Spleen (tissue), 13 donors: ENCODE measurements at regions of chr12 and their contacts with region 1.

Region 1: DNA sequence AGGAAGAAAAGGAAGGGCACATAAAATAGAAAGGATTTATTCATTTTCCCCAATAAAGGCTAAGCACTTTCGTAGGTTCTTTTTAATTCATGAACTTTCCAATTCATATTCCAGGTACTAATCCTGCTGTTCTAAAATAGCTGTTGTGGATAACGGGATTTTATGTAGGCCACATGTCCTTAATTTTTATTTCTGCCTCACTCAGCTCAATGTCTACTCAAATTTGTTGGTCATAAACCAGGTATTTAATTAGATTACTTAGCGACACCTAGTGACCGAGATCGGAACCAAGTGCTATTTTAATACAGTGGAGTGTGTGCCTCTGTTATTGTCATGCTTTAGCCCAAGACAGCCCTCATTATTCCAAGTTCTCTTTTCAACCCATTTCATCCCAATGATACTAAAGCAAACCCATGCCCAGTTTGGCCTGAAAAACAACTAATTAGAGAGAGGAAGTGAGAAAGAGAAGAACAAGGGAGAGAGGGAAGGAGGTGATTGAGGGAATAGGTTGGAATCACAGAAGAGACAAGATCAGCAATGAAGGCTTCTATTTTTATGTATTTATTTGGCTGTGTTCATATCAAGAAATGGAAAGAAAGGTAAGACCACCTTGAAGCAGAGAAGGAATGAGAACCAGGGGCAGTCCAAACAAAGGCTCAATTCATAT is 45.9 kb upstream of the IFNG-AS1 start:
- DNase-seq: no peak
- H3K4me3 ChIP-seq: no peak overlapping the region
- H3K27ac ChIP-seq: no peak overlapping the region
- H3K4me1 ChIP-seq: peaks cover 0 to 9% (median 0%) of the 10 kb centered on the region in 6 donors
- H3K27me3 ChIP-seq: no peaks in the 10 kb centered on the region
- CTCF ChIP-seq: peak; percentile 30 to 83 (median 74)
- POLR2A ChIP-seq: no peak

Region 2: DNA sequence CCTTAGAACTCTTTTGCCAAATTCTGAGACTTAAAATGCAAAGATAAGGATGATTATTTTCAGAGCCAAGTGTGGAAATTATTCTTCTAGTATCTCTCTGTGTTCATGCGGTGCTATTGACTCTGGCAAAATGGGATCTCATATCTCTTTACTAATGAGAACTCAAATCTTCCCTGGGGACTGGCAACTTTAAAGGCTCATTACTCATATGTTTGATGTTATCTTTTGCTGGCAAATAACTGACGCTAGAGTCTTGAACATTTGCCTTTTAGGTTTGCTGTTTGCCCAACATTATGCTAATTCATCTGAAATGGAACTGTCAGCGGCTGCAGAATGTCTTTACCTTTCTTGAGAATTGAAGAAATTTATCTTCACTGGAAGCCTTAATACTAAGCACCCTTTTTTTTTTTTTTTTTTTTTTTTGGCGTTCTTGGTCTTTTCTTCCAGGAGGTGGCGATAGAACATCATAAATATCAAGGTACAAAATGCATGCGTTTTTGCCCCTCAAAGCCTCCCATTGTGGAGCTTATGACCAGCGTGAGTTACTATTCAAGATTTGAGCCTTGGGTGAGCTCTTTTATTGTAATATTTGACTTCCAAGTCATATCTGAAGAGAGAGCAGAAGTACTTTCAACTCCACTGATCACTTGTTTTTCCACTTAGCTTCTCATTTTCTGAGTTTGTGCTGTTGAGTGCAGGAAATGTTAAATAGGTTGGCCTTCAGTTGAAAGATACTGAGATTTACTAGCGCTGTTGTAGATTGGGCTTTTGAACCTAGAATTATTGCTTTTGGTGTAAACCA is 587.6 kb before region 1 on chr12:
- intact Hi-C with region 1: loop called (anchors 2 kb)
- DNase-seq: no peak
- H3K4me3 ChIP-seq: no peak overlapping the region
- H3K27ac ChIP-seq: peak overlapping the region in 1 of 8 donors; percentile 10
- H3K4me1 ChIP-seq: peaks cover 4 to 15% (median 6%) of the 10 kb centered on the region in 6 donors
- H3K27me3 ChIP-seq: no peaks in the 10 kb centered on the region
- CTCF ChIP-seq: peak in 9 of 11 experiments; percentile 29 to 70 (median 52)
- POLR2A ChIP-seq: no peak

Region 3: GRCh38 chr12:68686595-68687521 is 743.5 kb after region 1 on chr12 and contains the start of gene NUP107:
- intact Hi-C with region 1: no loop called
- DNase-seq: peak; percentile 99
- H3K4me3 ChIP-seq: peak within 1 kb of the TSS; percentile 78 to 100 (median 97)
- H3K27ac ChIP-seq: peak within 1 kb of the TSS; percentile 68 to 90 (median 86)
- H3K4me1 ChIP-seq: peaks cover 18 to 41% (median 27%) of the 10 kb centered on the region in 6 donors
- H3K27me3 ChIP-seq: no peaks in the 10 kb centered on the region
- CTCF ChIP-seq: peak in 6 of 11 experiments; percentile 15 to 42 (median 33)
- POLR2A ChIP-seq: peak in 1 of 3 donors; percentile 73
- total RNA-seq, gene NUP107: 41.1 to 61.4 (median 53.4) TPM